Calu3 (cell line): ENCODE measurements at regions of chr3 and their contacts with region 1.

Region 1: GRCh38 chr3:99482191-99482590 is 156.2 kb upstream of the COL8A1 start:
- DNase-seq: no peak
- H3K4me3 Mint-ChIP-seq: no peak overlapping the region
- H3K27ac Mint-ChIP-seq: no peak overlapping the region
- H3K4me1 Mint-ChIP-seq: peaks cover 10% of the 10 kb centered on the region
- H3K27me3 Mint-ChIP-seq: no peaks in the 10 kb centered on the region
- CTCF ChIP-seq: no peak

Region 2: DNA sequence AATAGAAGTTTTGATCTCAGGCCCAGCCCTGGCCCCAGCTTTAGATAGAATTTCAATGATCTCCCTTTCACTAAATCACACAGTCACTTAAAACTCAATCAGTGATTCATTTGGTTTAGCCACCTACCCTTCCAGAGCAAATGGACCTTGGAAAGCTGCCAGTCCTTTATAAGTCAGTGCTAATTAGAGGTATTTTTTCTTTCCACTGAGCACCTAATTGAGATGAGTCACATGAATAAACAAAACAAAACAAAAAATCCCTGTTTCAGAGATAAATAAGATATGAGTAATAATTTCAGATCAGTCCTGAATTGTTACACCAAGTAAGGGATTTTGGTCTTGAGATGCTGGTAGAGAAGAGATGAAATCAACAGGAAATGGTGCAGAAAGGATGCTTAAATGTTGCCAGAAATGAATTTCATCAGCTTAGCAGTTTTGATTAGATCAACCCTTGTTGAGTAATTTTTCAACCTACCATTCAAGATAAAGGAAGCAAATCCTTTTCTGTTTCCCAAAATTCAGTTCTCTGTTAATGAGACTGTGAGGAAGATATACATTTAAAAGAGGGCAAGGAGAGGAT is 195.8 kb before region 1 on chr3:
- CTCF ChIA-PET with region 1: interaction called, 11 read pairs
- intact Hi-C with region 1: no loop called
- DNase-seq: no peak
- H3K4me3 Mint-ChIP-seq: no peak overlapping the region
- H3K27ac Mint-ChIP-seq: no peak overlapping the region
- H3K4me1 Mint-ChIP-seq: no peaks in the 10 kb centered on the region
- H3K27me3 Mint-ChIP-seq: no peaks in the 10 kb centered on the region
- CTCF ChIP-seq: no peak